ENCODE measurements at regions of chr10 and their contacts with region 1.

Region 1: DNA sequence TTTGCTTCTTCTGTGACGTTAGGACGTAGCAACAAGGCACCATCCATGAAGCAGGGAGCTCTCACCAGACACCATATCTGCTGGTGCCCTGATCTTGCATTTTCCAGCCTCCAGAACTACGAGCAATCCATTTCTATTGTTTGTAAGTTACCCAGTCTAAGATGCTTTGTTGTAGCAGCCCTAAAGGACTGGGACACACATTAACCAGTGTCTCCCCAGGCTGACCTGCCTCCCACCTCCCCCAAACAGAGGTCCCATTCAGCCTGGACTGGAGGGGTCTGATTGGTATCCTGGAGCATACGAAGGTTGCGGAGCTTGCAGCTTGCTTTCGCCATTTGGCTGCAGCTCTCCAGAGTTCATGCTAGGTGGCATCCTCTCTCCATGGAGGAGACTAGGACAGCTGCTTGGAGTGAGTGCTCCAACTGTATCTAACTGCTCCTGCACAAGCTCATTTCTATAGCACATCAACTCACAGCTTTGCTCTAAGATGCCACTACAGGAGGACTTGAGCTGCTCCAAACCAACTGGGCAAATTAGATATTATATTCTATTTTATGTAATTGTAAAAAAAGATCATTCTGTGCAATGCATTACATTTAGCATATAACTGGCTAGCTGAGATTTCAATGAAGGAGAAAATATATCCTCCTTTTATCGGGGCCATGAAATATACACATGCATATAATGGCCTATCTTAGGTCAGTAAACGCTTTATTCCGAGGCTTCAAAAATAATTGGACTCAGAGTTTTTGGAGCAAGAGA is 8.0 kb upstream of the GRK5 start:
- H3K4me3 Mint-ChIP-seq: no peak overlapping the region
- H3K27ac Mint-ChIP-seq: no peak overlapping the region
- H3K4me1 Mint-ChIP-seq: peaks cover 13% of the 10 kb centered on the region
- H3K27me3 Mint-ChIP-seq: peaks cover 9% of the 10 kb centered on the region

Region 2: DNA sequence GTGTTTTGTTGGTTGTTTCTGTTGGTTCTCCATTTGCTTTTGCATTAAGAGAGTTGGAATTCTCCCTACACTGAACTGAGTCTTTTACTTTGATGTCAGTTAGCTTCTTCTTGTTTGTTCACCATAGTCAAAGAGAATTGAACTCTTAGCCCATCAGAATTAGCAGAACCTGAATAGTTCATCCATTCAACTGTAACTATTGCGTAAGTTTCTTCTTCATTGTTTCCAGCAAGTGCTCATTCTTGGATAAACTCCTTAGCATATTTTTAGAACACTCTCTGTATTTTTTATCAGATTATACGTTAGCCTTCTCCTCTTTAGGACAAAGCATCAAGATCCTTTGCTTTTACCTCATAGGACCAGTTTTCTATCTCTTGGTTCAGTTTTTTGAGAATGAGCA is 1024.3 kb before region 1 on chr10:
- intact Hi-C with region 1: no loop called
- H3K4me3 Mint-ChIP-seq: no peak overlapping the region
- H3K27ac Mint-ChIP-seq: no peak overlapping the region
- H3K4me1 Mint-ChIP-seq: no peaks in the 10 kb centered on the region
- H3K27me3 Mint-ChIP-seq: no peaks in the 10 kb centered on the region

Region 3: DNA sequence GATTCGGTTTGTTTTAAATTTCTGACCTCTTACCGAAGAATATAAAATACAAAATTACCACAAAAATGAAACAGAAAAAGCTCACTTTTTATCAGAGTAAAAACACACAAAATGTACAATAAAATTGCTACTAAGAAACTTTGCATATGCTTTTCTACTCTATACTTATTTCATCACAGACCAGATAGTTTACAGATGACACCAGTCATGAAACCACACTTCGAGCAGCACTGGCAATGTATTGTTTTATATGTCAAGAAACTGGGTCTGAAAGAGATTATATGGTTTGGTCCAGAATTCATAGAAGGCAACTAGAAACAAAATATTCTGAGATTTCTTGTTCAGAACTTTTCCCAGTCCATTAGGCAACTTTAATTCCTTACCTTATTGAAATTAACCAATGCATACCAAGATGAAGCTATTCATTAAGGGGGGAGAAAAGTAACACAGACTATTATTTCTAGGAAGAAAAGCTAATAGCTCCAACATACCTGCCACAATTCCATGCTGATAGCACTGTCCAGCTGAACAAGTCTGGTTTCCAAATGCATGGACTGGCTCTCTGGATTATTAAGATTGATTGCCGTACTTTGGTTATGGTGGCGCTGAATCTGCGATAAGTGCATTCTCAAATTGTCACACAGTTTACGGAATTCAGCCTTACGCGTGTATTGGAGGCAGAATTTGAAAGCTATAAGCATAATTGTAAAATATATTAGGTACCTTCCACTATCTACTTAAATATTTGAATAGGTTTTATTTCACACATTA is 128.8 kb before region 1 on chr10:
- intact Hi-C with region 1: no loop called
- H3K4me3 Mint-ChIP-seq: no peak overlapping the region
- H3K27ac Mint-ChIP-seq: no peak overlapping the region
- H3K4me1 Mint-ChIP-seq: no peaks in the 10 kb centered on the region
- H3K27me3 Mint-ChIP-seq: no peaks in the 10 kb centered on the region

Region 4: DNA sequence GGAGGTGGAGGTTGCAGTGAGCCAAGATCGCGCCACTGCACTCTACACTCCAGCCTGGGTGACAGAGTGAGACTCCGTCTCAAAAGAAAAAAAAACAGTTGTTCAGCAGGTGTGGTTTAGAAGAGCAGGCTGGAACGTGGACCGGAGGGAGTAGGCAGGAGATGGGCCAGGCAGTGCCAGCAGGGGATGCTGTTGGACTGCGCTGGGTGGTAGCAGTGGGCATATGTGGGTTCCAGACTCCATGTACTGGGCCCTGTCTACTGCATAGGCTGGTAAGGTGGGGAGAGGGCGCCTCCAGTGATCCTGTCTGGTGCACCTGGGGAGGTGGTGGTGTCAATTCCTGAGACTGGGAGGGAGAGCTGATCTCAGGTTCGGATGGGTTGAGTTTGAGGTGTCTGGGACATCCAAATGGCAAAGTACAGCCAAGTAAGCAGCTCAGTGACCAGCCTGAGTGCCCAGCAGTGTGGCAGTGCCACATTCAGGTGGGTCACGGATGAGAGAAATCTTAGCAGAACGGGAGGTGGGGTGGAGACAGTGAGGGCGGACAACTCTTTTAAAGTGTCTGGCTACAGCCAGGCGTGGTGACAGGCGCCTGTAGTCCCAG is 59.8 kb before region 1 on chr10:
- intact Hi-C with region 1: loop called (anchors 5 kb)
- H3K4me3 Mint-ChIP-seq: no peak overlapping the region
- H3K27ac Mint-ChIP-seq: no peak overlapping the region
- H3K4me1 Mint-ChIP-seq: peaks cover 26% of the 10 kb centered on the region
- H3K27me3 Mint-ChIP-seq: no peaks in the 10 kb centered on the region

Region 5: DNA sequence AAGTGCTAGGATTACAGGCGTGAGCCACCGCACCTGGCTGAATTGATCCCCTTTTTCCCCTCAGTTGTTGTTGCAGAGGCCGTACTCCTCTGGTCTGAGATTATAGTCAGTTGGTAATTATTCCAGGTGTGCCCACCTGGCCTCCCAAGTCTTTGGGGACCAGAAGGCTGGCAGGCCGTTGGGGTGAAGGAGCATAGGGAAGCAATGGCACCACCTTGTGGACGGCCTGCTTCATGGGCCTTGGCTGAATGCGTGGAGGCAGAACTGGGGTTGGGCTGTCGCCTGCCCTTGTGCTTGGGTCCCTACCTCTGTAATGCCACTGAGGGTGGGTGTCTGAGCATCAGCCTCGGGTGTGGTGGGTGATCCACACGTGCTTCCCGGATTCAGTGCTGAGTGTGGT is 217.4 kb after region 1 on chr10:
- intact Hi-C with region 1: loop called (anchors 1 kb)
- H3K4me3 Mint-ChIP-seq: no peak overlapping the region
- H3K27ac Mint-ChIP-seq: no peak overlapping the region
- H3K4me1 Mint-ChIP-seq: peaks cover 7% of the 10 kb centered on the region
- H3K27me3 Mint-ChIP-seq: peaks cover 1% of the 10 kb centered on the region

Region 6: DNA sequence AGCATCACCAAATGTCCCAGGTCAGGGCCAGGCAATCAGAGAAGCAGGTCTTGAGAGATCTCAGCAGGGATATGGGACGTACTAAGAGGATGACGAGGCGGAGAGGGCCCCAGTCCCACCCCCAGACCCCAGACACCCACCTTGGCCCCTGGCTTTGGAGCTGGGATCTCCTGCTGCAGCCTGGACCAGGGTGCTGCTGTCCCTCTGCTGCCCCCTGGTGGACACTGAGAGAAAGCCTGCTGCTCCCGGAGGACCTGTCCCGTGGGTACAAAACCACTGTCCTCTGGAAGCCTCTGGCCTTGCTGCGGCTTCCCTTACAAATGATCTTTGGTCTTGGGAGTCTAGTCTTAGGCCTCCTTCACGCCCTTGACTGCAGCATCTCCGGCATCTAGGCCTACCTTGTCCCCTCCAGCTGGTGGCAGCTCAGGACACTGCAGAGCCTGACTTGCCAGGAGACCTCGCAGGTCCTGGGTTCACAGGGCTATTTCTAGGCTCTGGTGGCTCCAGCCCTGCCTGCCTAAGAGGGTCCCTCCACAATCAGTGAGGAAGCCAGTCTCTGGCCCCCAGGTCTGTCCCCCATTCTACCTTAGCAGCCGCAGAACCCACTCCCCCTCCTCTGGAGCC is 246.0 kb after region 1 on chr10:
- intact Hi-C with region 1: loop called (anchors 1 kb)
- H3K4me3 Mint-ChIP-seq: no peak overlapping the region
- H3K27ac Mint-ChIP-seq: no peak overlapping the region
- H3K4me1 Mint-ChIP-seq: peaks cover 9% of the 10 kb centered on the region
- H3K27me3 Mint-ChIP-seq: no peaks in the 10 kb centered on the region

Measured in dendritic cell treated with granulocyte-macrophage colony-stimulating factor and Interleukin-4, amounts not matched to agents 40 ng/mL and 50 ng/mL, for 4 days (primary cell).